Endothelial cell of umbilical vein (primary cell): ENCODE measurements at regions of chr5 and their contacts with region 1.

Region 1: DNA sequence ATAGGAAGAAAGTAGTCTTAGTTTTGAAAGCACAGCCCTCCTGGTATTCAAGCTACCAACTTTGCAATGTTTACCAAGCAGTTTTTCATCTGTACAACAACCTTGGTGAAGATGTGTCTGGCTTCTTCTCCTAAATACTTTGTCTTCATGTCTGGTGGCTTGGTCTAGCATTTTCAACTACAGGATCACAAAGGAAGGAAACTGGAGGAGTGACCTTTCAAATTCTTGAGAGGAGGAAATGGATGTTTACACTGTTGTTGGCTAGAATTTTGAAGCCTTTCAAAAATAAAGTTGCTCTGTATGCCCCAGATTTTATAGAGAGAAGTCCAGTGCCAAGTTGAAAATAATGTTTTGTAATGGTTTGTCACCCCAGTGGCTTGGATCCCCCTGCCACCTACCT is 16.3 kb downstream of the PAM start:
- DNase-seq: peak; percentile 80
- H3K4me3 ChIP-seq: peak overlapping the region in 1 of 3 experiments; percentile 45
- H3K27ac ChIP-seq: peak overlapping the region; percentile 92
- H3K4me1 ChIP-seq: peaks cover 22% of the 10 kb centered on the region
- H3K27me3 ChIP-seq: no peaks in the 10 kb centered on the region
- CTCF ChIP-seq: no peak
- POLR2A ChIP-seq: no peak

Region 2: DNA sequence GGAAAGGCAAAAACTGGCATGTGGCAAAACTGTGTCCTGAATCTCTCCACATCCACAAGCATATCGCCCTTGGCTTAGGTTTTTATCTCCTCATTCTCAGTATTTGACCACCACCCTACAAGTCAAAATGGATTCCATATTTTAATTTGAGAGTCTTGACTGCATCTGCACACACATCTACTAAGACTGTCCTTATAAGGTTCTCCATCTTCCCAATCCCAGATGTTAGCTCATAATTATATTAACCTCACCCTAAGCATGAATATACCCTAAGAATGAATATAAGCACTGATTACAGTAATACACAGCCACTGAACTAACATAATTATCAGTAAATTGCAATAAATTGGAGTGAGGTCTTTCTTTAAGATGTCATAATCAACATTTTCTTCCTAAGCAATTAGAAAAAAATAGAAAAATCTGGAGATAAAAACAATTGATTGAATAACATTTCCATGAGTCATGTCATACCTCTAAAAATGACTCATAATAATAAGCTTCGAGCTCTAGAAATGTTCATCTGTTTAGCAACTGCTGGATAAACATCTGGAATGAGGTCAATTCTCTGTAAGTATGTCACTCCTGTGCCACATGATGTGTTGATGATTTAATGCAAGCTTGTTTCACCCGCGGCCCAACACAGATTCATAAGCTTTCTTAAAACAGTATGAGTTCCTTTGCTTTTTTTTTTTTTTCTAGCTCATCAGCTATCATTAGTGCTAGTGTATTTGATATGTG is 56.2 kb before region 1 on chr5:
- CTCF ChIA-PET with region 1: no interaction called
- POLR2A ChIA-PET with region 1: no interaction called
- dilution Hi-C with region 1: no loop called
- intact Hi-C with region 1: loop called (anchors 5 kb)
- DNase-seq: peak; percentile 77
- H3K4me3 ChIP-seq: no peak overlapping the region
- H3K27ac ChIP-seq: no peak overlapping the region
- H3K4me1 ChIP-seq: peaks cover 15% of the 10 kb centered on the region
- H3K27me3 ChIP-seq: no peaks in the 10 kb centered on the region
- CTCF ChIP-seq: no peak
- POLR2A ChIP-seq: no peak

Region 3: GRCh38 chr5:102755686-102756371 is 15.6 kb before region 1 on chr5:
- CTCF ChIA-PET with region 1: interaction called, 5 read pairs
- POLR2A ChIA-PET with region 1: no interaction called
- dilution Hi-C with region 1: no loop called
- intact Hi-C with region 1: loop called (anchors 1 kb)
- DNase-seq: peak; percentile 78
- H3K4me3 ChIP-seq: peak overlapping the region; percentile 73 to 90 (median 86)
- H3K27ac ChIP-seq: peak overlapping the region; percentile 81
- H3K4me1 ChIP-seq: peaks cover 15% of the 10 kb centered on the region
- H3K27me3 ChIP-seq: no peaks in the 10 kb centered on the region
- CTCF ChIP-seq: no peak
- POLR2A ChIP-seq: no peak

Region 4: DNA sequence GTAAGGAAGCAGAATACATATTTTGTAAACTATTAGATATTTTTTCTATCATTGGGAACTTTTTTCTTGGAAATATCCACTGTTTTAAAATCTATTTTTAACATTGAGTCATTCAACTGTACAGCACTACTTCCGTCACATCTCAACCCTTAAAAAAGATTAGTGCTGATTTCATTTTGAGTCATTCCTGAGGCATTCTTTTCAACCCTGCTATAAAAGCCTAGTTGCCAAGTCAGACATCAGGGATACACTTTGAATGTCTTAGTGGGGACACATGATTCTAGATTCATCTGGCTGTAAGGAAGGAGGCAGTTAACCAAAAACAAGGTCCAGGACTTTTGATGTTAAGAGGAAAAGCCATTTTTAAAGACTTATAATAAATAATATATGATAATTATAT is 187.6 kb after region 1 on chr5:
- CTCF ChIA-PET with region 1: no interaction called
- POLR2A ChIA-PET with region 1: no interaction called
- dilution Hi-C with region 1: no loop called
- intact Hi-C with region 1: loop called (anchors 1 kb)
- DNase-seq: peak; percentile 91
- H3K4me3 ChIP-seq: peak overlapping the region in 1 of 3 experiments; percentile 18
- H3K27ac ChIP-seq: peak overlapping the region; percentile 97
- H3K4me1 ChIP-seq: peaks cover 24% of the 10 kb centered on the region
- H3K27me3 ChIP-seq: no peaks in the 10 kb centered on the region
- CTCF ChIP-seq: no peak
- POLR2A ChIP-seq: no peak

Region 5: DNA sequence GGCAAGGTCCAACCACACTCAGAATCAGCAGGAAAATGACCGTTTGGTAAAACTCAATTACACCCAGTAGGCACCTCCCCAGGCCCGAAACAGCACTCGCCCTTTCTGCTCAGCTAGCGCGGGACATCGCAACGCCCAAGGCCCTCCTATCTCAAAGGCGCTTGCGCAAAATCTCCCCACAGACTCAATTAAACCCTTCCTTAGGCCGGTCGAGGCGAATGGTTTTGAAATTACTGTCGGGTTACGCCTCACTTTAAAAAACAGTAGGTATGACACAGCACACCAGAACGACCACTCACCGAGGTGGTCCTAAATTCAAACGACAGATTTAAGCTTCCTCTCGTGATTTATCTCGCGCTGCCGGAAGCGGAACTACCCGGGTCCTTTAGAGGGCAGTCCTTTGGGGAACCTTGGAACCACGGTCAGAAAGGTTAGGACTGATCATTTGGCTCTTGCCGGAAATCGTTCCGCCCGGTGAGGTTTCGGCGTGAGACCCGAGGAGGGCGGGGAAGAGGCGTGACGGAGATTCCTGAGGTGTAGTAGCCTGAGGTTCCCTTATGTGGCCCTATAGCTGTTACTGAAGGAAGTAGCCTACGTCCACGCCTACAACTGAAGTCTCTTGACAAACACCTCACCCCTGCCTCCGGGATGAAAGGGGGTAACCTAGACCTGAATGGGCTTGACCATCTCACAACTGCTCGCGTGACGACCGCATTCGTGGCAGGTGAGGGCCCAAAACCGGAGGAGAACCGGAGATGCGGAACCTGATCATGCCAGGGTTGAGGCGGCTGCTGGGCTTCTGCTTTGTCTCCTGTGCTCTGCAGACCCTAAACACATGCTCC is 348.6 kb after region 1 on chr5 and contains the starts of genes GIN1 and PPIP5K2:
- CTCF ChIA-PET with region 1: no interaction called
- POLR2A ChIA-PET with region 1: no interaction called
- dilution Hi-C with region 1: no loop called
- intact Hi-C with region 1: loop called (anchors 5 kb)
- DNase-seq: peak; percentile 99
- H3K4me3 ChIP-seq: peak within 1 kb of the TSS; percentile 63 to 92 (median 92)
- H3K27ac ChIP-seq: peak within 1 kb of the TSS; percentile 93
- H3K4me1 ChIP-seq: peaks cover 19% of the 10 kb centered on the region
- H3K27me3 ChIP-seq: no peaks in the 10 kb centered on the region
- CTCF ChIP-seq: no peak
- POLR2A ChIP-seq: peak; percentile 50
- total RNA-seq, gene GIN1: 4.4 and 6.7 TPM in 2 replicates
- total RNA-seq, gene PPIP5K2: 53.5 and 69.4 TPM in 2 replicates